ENCODE measurements at regions of chr4 and their contacts with region 1.

Region 1: DNA sequence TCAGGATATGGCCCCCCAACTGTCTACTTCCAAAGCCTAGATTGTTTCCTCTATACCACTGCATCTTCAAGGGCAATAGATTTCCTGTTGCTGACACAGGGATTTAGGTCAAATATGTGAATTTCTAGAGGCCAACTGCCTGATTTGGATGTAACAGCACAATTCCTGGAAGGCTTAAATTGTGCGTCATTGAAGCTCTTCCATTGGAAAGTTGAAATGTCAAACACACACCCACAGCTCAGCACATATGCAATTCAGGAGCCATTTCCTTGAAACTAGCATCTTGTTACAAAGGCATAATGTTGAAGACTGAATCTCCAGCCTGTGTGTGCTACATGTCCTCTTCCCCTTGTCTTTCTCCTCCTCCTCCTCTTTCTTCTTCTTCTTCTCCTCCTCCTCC is 158.6 kb downstream of the STK32B start:
- DNase-seq: no peak

Region 2: DNA sequence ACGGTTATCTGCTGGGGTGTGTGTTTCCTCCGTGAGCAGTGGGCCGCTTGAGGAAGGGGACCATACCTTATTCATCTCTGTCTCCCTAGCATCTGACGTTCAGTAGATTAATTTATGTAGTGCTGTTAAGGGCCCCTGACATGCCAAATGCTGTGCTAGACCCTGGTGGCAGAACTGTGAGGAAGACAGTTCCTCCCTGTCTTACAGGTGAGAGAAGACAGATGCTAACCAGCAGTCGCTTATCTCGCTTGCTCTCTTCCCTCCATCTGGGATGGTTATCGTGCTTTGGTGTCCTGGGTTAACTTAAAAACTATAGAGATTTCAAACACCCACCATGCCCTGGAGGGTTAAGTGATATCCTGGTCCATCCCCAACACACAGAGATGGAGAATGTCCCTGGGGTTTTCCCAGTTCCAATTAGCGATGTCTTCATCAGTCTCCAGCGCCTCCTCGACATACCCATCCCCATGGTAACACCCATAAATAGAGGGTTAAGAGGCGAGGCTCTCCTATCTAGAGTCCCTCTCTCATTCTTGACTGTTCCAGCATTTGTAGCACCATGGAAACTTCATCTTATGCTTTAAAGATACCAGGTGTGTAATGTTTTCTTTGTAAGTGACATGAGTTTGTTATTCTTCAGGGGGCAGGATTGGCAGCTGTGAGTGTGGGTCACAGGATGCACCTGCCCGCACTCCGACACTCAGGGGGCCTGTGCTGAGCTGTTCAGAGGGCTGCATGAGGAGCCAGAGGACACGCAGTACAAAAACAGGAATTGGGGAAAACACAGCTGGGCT is 23.4 kb before region 1 on chr4:
- intact Hi-C with region 1: loop called in 1 of 2 experiments (anchors 1 kb)
- DNase-seq: no peak

Region 3: DNA sequence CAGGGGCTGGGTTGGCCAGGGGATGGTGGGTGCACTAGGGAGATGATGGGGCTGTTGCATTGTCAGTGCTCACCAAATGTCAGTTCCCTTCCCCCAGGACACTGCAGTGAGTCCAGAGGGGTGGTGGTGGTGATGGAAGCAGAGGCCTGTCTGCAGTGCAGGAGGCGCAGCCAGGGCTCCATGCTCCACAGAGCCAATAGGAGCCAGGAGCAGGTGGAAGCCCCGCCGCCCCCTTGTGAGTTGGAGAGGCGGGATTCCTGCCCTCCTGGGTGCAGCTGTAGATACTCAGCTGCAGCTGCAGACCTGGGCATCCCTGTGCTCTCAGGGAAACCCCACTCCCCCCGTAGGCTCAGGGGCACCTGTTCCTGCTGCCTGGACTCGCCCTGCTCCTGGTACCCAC is 213.8 kb after region 1 on chr4:
- intact Hi-C with region 1: no loop called
- DNase-seq: no peak